Calu3 (cell line): ENCODE measurements at regions of chr17 and their contacts with region 1.

Region 1: GRCh38 chr17:37527249-37527851 is 37.7 kb downstream of the DUSP14 start:
- DNase-seq: peak; percentile 74
- H3K4me3 Mint-ChIP-seq: no peak overlapping the region
- H3K27ac Mint-ChIP-seq: no peak overlapping the region
- H3K4me1 Mint-ChIP-seq: no peaks in the 10 kb centered on the region
- H3K27me3 Mint-ChIP-seq: no peaks in the 10 kb centered on the region
- CTCF ChIP-seq: peak; percentile 94

Region 2: DNA sequence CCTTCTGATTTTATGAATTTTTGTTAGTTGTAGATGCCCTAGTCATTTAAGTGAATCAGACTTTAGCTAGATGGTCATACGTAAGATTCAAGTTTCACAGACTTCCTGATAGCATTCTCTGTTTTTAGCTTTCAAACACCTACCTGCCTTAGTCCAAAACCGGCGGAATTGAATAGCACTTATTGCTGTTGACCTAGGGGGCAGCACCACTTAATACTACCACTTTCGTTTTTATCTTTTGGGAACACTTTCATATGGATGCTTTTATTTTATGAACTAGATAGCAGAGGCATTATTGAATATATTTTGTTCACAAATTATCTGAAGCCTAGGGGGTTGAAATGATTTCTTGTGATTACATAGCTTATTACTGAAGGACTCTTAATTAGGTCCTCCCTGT is 89.2 kb before region 1 on chr17:
- CTCF ChIA-PET with region 1: no interaction called
- intact Hi-C with region 1: no loop called
- DNase-seq: no peak
- H3K4me3 Mint-ChIP-seq: no peak overlapping the region
- H3K27ac Mint-ChIP-seq: no peak overlapping the region
- H3K4me1 Mint-ChIP-seq: no peaks in the 10 kb centered on the region
- H3K27me3 Mint-ChIP-seq: no peaks in the 10 kb centered on the region
- CTCF ChIP-seq: peak; percentile 47

Region 3: GRCh38 chr17:37570527-37571093 is 43.3 kb after region 1 on chr17:
- CTCF ChIA-PET with region 1: interaction called, 12 read pairs
- intact Hi-C with region 1: loop called (anchors 1 kb)
- DNase-seq: peak; percentile 92
- H3K4me3 Mint-ChIP-seq: no peak overlapping the region
- H3K27ac Mint-ChIP-seq: no peak overlapping the region
- H3K4me1 Mint-ChIP-seq: no peaks in the 10 kb centered on the region
- H3K27me3 Mint-ChIP-seq: no peaks in the 10 kb centered on the region
- CTCF ChIP-seq: peak; percentile 88